Right ventricle myocardium superior (tissue), 1 donor: ENCODE measurements at regions of chr2 and their contacts with region 1.

Region 1: DNA sequence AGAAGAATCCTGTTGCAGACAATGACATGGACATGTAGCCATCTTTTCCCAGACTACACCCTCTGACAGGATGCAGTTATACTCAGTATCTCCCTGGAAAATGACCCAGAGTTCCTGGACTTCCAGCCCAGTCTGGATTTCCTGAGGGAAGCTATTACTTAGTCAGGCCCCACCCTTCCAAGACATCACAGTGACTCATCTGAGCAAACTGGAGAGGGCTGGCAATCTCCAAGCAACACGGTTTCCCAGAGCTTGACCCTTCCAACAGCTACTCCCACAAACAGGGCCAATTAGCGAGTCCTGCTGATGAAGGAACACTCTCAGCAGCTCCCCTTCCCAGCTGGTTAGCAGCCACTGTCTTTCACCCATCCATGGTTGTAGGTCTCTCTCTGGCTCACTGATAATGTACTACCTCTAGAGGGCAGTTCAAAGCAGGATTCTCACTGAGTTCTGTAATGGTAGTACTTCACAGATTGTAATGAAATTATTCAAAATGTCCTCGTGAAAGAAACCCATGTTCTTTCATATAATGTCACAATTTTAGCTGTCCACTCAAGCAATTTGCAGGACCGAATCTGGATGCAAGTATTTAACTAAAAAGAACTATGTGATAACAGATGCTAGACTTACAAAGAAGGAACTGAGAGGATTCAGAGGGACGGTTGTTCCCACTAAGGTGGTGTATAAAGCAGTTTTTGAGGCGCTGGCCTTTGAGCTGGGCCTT is 110.2 kb downstream of the MDH1 start:
- DNase-seq: no peak
- ATAC-seq: peak; percentile 97

Region 2: DNA sequence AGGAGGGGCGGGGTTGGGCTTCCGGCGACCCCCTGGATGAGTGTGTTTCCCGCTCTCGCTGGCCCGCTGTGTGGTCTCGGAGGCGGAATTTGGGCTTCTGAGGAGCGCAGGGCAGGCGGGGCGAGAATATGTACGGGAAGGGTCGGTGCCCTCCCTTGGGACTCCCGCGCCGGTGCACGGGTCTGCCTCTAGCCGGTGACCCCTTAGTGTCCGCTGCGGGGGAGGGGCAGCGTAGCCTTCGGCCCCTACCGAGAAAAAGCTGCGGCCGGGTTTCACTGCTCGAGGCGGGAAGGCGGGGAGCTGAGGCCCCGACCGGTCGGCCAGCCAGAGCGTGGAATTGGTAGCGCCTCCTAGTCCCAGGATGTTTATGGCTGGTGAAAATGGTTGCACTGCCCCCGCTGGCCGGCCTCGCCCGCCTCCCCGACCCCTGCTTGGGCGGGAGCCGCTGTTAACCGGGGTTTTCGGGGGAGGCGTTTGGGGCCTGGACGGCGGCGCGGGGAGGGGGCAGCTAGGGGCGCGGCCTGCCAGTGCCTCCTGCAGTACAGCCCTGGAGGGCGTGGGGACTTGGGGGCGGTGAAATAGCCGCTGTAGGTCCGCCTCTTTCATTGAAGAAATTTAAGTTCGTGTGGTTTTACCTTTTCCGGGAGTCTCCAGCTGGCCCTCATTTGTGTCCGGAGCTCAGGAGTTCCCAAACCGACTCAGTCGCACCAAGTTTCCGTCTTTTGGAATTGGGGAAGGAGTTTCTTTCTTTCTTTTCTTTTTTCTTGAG is 142.5 kb after region 1 on chr2 and contains the start of gene UGP2:
- intact Hi-C with region 1: loop called (anchors 5 kb)
- DNase-seq: peak; percentile 94
- ATAC-seq: peak; percentile 89
- total RNA-seq, gene UGP2: 307 TPM

Region 3: GRCh38 chr2:63888490-63889402 is 189.8 kb after region 1 on chr2:
- intact Hi-C with region 1: loop called (anchors 5 kb)
- DNase-seq: no peak
- ATAC-seq: peak; percentile 77